IMR-90 (cell line): ENCODE measurements at regions of chr12 and their contacts with region 1.

Region 1: DNA sequence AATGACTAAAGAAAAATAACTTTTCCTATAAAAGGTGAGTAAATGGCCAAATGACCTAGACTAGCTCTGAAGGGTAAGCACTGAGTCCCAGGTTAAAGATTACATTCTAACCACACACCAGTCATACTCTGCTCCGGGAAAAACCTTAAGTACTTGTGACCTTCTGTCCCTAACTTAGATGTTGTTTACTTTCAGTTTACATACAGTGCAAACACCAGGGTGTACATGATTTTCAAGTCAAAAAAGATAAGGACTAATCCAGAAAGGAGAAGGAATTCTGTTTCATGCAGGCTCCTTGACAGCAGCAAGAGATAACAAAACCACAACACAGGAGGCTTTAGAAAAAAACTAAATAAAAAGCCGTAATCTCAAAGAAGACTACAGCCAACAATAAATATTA is 174.2 kb downstream of the PPM1H start:
- DNase-seq: peak; percentile 47
- ATAC-seq: peak; percentile 18
- H3K4me3 ChIP-seq: no peak overlapping the region
- H3K27ac ChIP-seq: no peak overlapping the region
- H3K4me1 ChIP-seq: peaks cover 8% of the 10 kb centered on the region
- H3K27me3 ChIP-seq: peaks cover 40% of the 10 kb centered on the region
- CTCF ChIP-seq: no peak
- POLR2A ChIP-seq: no peak
- RAD21 ChIP-seq: no peak

Region 2: DNA sequence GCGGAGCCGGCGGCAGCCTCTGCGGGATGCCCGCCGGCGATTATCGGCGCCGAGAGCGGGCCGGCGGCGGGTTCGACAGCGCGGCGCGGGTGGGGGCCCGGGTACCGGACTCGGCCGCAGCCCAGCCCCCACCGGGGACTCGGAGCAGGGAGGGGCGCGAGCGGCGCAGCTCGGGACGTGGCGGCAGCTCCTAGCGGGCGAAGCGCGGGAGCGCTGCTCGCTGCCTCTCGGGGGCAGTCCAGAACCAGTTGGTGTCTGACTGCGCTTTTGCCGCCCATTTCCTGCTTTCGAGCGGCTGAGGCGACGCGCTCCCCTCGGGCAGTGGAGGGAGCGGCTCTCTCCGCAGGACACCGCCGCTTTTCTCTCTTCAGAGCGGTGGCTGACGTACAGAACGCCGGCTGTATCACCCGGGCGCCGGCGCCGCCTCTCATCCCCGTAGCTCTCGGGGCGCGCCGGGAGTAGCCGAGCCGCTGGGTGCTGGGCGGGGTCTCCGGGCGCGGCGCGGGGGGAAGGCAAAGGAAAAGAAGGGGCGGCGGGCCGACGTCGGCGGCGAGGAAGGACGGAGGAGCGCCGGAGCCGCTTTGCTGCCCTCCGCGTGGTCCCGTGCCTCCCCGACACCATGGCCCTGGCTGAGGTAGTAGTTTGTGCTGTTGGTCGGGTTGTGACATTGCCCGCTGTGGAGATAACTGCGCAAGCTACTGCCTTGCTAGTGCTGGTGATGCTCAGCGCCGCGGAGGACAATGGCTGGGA is 157.5 kb before region 1 on chr12:
- CTCF ChIA-PET with region 1: no interaction called
- POLR2A ChIA-PET with region 1: no interaction called
- dilution Hi-C with region 1: no loop called
- in situ Hi-C with region 1: no loop called
- intact Hi-C with region 1: loop called (anchors 1 kb)
- DNase-seq: peak; percentile 89
- ATAC-seq: peak; percentile 90
- H3K4me3 ChIP-seq: peak overlapping the region; percentile 97
- H3K27ac ChIP-seq: peak overlapping the region; percentile 99
- H3K4me1 ChIP-seq: no peaks in the 10 kb centered on the region; the same call in 1 of the 2 replicates
- H3K27me3 ChIP-seq: no peaks in the 10 kb centered on the region
- CTCF ChIP-seq: peak; percentile 60
- POLR2A ChIP-seq: peak; percentile 88
- RAD21 ChIP-seq: peak; percentile 56

Region 3: GRCh38 chr12:62631471-62632410 is 129.0 kb before region 1 on chr12:
- CTCF ChIA-PET with region 1: no interaction called
- POLR2A ChIA-PET with region 1: no interaction called
- dilution Hi-C with region 1: no loop called
- in situ Hi-C with region 1: no loop called
- intact Hi-C with region 1: loop called (anchors 5 kb)
- DNase-seq: peak; percentile 61
- ATAC-seq: peak; percentile 92
- H3K4me3 ChIP-seq: peak overlapping the region; percentile 50
- H3K27ac ChIP-seq: no peak overlapping the region
- H3K4me1 ChIP-seq: no peaks in the 10 kb centered on the region
- H3K27me3 ChIP-seq: peaks cover 5% of the 10 kb centered on the region
- CTCF ChIP-seq: peak; percentile 28; the same call in 1 of the 2 replicates
- POLR2A ChIP-seq: no peak
- RAD21 ChIP-seq: no peak

Region 4: GRCh38 chr12:62772416-62772955 is 11.7 kb after region 1 on chr12:
- CTCF ChIA-PET with region 1: no interaction called
- POLR2A ChIA-PET with region 1: no interaction called
- dilution Hi-C with region 1: no loop called
- in situ Hi-C with region 1: no loop called
- intact Hi-C with region 1: loop called (anchors 2 kb)
- DNase-seq: peak; percentile 47
- ATAC-seq: no peak
- H3K4me3 ChIP-seq: no peak overlapping the region
- H3K27ac ChIP-seq: no peak overlapping the region
- H3K4me1 ChIP-seq: no peaks in the 10 kb centered on the region
- H3K27me3 ChIP-seq: peaks cover 16% of the 10 kb centered on the region
- CTCF ChIP-seq: no peak
- POLR2A ChIP-seq: no peak
- RAD21 ChIP-seq: no peak